Naive thymus-derived CD8-positive, alpha-beta T cell (primary cell): ENCODE measurements at regions of chr3 and their contacts with region 1.

Region 1: DNA sequence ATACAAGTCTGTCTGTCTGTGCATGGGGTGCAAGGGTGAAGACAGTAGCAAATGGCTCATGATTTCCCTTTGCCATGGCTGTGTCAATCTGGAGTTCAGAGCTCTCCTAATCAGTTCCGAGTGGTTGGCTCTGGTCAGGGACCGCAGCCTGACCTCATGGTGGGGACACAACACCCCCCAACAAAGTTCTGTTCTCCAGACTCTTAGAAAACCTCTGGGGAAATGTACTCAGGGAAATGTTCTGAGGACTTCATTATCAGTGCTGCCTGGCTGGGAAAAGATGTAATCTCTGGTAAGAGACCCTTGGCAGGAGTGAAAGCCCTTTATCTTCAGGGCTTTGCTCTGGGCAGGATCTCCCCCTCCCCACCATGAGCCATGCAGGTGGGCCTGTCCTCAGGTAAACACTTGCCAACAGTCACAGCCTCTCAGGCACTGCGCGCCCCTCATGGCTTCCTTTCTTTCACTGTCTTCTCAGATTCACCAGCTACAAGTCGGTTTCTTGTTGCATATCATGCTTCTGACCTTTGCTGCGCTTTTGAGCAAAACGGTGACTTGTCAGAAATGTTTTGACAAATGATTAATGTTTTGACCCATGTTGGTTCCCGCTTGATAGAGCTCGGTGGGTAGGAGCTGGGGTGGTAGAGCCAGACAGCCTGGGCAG is 95.5 kb downstream of the ST6GAL1 start:
- DNase-seq: peak in 2 of 10 donors; percentile 39 to 43
- ATAC-seq: peak; percentile 10 to 18
- H3K4me3 Mint-ChIP-seq: peak overlapping the region; percentile 85 to 95 (median 90)
- H3K27ac Mint-ChIP-seq: peak overlapping the region; percentile 88 to 99 (median 94)
- H3K4me1 Mint-ChIP-seq: peaks cover 36 to 90% (median 67%) of the 10 kb centered on the region in 4 donors
- H3K27me3 Mint-ChIP-seq: no peaks in the 10 kb centered on the region

Region 2: GRCh38 chr3:186909078-186909853 is 116.5 kb before region 1 on chr3:
- POLR2A ChIA-PET with region 1: interaction called, 21 read pairs
- DNase-seq: peak; percentile 25 to 88 (median 76)
- ATAC-seq: peak; percentile 96 to 97
- H3K4me3 Mint-ChIP-seq: peak overlapping the region; percentile 60 to 84 (median 74)
- H3K27ac Mint-ChIP-seq: peak overlapping the region; percentile 88 to 97 (median 92)
- H3K4me1 Mint-ChIP-seq: peaks cover 11 to 49% (median 37%) of the 10 kb centered on the region in 4 donors
- H3K27me3 Mint-ChIP-seq: no peaks in the 10 kb centered on the region

Region 3: DNA sequence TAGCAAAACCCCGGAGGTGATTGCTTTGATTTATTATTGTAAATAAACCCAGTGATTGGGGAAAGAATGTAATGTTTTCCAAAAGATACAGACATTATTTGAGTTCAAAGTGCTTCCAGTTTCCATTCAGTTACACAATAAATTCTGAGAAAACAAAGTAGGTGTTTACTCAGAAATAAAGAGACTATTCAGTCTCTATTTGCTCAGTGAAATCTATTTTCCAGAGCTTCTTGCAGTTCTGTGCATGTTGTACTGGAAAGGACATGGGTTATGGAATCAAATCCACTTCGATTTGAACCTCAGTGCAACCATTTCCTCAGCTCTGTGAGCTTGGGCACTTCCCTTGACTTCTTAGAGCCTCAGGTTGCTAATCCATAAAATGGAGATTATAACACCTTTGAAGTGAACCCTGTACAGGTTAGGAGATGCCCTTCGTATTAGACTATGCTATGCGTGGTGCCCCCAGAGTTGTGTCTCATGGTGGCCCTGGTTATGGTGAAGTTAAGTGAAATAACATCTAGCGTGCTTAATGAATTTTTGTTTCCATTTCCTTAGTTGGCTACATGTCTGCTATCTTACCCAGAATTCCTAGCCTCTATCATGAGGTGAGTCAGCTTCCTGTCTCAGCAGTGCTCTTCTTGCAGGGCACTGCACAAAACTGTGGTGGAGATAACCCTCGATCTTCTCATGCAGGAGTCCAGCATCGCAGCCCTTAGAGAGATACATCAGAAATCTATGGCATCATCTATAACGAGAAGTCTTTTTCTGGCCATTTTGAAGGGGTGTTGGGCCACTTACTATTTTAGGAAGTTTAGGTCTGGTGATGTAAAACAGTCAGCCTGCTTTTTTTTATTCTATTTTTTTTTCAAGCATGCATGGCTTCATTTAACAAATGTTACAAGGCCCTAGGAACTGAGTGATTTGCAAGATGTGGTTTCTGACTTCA is 15.8 kb after region 1 on chr3:
- POLR2A ChIA-PET with region 1: interaction called, 123 read pairs
- DNase-seq: peak in 6 of 10 donors; percentile 26 to 74 (median 50)
- ATAC-seq: peak; percentile 93 to 94
- H3K4me3 Mint-ChIP-seq: peak overlapping the region; percentile 40 to 84 (median 74)
- H3K27ac Mint-ChIP-seq: peak overlapping the region; percentile 72 to 97 (median 94)
- H3K4me1 Mint-ChIP-seq: peaks cover 50 to 86% (median 82%) of the 10 kb centered on the region in 4 donors
- H3K27me3 Mint-ChIP-seq: no peaks in the 10 kb centered on the region

Region 4: DNA sequence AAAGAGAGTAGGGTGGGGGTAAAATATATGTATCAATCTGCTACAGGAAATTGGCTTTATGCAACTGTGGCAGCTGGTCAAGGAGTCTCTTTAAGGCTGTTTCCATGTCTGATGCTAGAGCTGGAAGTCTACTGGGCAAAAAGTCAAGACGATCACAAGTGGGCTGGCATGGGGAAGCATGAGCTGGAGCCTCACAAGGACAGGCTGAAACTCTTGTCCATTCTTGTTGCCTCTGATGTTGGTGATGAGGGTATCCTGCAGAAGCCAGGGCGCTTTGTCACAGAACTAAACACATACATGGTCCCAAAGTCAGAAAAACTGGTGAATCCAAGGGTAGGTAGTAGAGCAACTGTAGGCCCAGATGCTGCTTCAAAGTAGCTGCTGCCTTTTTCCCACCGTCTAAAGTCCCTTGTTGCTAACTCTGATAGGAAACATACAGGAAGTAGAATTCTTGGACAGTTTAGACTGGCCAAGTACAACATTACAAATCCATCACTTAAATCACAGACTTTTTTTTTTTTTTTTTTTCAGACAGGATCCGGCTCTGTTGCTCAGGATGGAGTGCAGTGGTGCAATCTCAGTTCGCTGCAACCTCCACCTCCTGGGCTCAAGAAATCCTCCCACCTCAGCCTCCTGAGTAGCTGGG is 59.4 kb after region 1 on chr3:
- POLR2A ChIA-PET with region 1: interaction called, 11 read pairs
- DNase-seq: no peak
- ATAC-seq: no peak
- H3K4me3 Mint-ChIP-seq: peak overlapping the region in 1 of 10 donors; percentile 9
- H3K27ac Mint-ChIP-seq: peak overlapping the region in 3 of 10 donors; percentile 26 to 59 (median 52)
- H3K4me1 Mint-ChIP-seq: peaks cover 5 to 18% (median 11%) of the 10 kb centered on the region in 4 donors
- H3K27me3 Mint-ChIP-seq: no peaks in the 10 kb centered on the region